Pancreas (tissue), 10 donors: ENCODE measurements at regions of chr7 and their contacts with region 1.

Region 1: GRCh38 chr7:158976849-158977593 is 120.7 kb downstream of the DYNC2I1 start:
- DNase-seq: peak; percentile 60 to 98 (median 86)
- ATAC-seq: peak; percentile 88 to 97 (median 92)
- H3K4me3 ChIP-seq: peak overlapping the region in 2 of 4 donors; percentile 16 to 32
- H3K27ac ChIP-seq: peak overlapping the region in 1 of 4 donors; percentile 20
- H3K4me1 ChIP-seq: no peaks in the 10 kb centered on the region
- H3K27me3 ChIP-seq: no peaks in the 10 kb centered on the region
- CTCF ChIP-seq: peak; percentile 79 to 88 (median 84)

Region 2: DNA sequence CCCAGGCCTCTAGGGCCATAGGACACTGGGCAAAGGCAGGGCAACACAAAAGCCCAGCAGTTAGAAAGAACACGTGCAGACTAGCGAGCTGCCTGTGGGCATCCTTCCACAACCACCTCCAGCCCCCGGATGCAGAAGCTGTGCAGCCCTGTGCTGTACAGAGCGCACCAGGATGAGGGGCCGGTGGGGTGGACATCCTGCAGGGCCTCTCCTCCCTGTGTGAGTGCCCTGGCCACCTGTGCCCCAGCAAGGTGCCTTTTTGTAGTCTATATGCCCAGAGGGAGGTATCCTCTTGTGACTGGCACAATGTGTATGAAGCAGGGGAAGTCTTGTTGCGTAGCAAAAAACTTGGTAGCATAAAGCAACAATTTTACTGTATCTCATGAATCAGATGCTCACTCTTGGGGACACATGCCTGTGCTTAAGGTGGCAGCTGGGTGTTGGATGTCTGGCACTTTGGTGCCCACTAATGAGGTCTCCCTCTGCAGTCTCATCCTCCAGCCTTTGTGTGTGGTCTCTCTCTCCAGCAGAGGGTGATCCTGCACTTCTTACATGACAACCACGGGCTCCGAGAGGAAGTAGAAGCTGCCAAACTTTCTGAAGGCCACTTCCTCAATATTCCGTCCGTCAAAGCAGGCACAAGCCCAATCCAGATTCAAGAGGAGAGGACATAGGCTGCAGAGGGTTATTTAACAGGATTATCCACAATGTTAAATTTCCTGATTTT is 281.1 kb before region 1 on chr7:
- intact Hi-C with region 1: loop called in 1 of 3 experiments (anchors 5 kb)
- DNase-seq: peak in 4 of 6 donors; percentile 44 to 70 (median 56)
- ATAC-seq: peak; percentile 94 to 100 (median 98)
- H3K4me3 ChIP-seq: no peak overlapping the region
- H3K27ac ChIP-seq: peak overlapping the region in 1 of 4 donors; percentile 5
- H3K4me1 ChIP-seq: peaks cover 4 to 7% (median 6%) of the 10 kb centered on the region in 3 donors
- H3K27me3 ChIP-seq: no peaks in the 10 kb centered on the region
- CTCF ChIP-seq: peak in 3 of 4 donors; percentile 22 to 32 (median 30)

Region 3: DNA sequence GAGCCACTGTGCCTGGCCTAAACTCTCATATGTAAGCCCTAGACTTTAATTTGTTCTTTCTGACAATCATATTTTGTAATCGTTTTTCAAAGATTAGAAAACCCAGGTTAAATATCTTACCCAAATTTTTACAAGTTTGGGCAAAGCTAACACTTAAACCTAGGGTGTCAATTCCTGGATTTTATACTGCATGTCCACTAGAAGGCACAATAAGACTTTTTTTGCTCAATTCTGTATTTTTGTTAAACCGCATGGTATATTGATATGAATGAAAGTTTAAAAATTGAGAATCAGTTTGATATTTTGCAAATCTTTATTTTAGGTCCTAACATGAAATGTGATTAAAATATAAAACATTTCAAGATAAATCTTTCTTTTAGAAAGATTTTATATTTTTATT is 91.4 kb before region 1 on chr7:
- intact Hi-C with region 1: loop called in 1 of 3 experiments (anchors 5 kb)
- DNase-seq: no peak
- ATAC-seq: peak in 3 of 4 donors; percentile 51 to 74 (median 56)
- H3K4me3 ChIP-seq: no peak overlapping the region
- H3K27ac ChIP-seq: no peak overlapping the region
- H3K4me1 ChIP-seq: no peaks in the 10 kb centered on the region
- H3K27me3 ChIP-seq: no peaks in the 10 kb centered on the region
- CTCF ChIP-seq: no peak